ENCODE measurements at regions of chr20 and their contacts with region 1.

Region 1: GRCh38 chr20:19934792-19935491 is 82.2 kb upstream of the NAA20 start:
- DNase-seq: peak; percentile 48
- CTCF ChIP-seq: no peak

Region 2: GRCh38 chr20:19913927-19914614 is 20.9 kb before region 1 on chr20:
- CTCF ChIA-PET with region 1: interaction called, 32 read pairs
- POLR2A ChIA-PET with region 1: interaction called, 6 read pairs
- DNase-seq: no peak
- CTCF ChIP-seq: no peak

Region 3: GRCh38 chr20:19947611-19948264 is 12.8 kb after region 1 on chr20:
- CTCF ChIA-PET with region 1: interaction called, 21 read pairs
- POLR2A ChIA-PET with region 1: interaction called, 9 read pairs
- DNase-seq: peak; percentile 47
- CTCF ChIP-seq: no peak

Measured in GM10248 (cell line).